CD8-positive, alpha-beta T cell (primary cell): ENCODE measurements at regions of chr10 and their contacts with region 1.

Region 1: DNA sequence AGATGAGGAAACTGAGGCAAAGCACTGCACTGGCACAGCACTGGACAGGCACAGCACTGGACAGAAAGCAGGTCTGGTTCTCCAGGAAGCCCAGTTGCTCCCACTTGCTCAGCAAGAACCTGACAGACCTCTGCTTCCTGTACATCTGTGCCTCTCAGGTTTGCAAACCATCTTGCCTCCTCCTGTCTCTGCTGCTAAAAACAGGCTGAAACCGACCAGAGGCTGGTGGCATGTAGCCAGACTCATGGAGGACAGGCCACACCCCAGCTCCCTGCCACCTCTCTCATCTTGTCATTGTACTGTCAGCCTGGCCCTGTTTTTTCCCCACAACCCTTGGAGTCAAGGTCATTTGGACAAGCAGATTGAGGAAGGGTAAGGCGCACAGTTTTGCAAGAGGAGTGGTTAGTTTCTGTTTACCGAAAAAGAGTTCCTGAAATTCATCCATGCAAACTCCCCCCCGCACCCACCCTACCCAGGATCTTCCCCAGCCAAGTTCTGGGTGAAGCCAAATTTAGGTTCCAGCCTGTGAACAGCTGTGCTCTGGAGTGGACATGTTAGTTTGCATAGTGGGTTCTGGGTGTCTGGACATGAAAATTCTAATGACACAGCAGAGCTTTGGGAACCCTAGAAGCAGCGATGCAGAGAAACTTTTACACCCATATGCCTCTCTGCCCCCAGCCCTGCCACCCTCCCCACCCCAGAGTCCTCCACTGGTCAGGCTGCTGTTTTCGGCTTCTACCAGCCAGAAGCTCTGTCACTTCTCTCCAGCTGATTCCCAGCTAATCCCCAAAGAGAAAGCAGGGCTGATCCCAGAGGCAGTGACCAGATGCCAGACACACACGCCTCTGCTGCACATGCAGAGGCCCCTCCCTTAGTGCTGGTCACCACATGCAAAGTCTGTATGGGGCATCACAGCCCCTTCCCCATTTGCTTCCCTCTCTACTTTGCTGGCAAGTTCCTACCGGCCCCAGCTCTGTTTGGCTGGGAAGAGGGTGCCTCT is 8.5 kb upstream of the C10orf105 start:
- DNase-seq: peak; percentile 58 to 93 (median 78)
- ATAC-seq: peak; percentile 60
- H3K4me3 ChIP-seq: peak overlapping the region; percentile 16 to 18
- H3K4me3 Mint-ChIP-seq: peak overlapping the region; percentile 58
- H3K27ac ChIP-seq: peak overlapping the region; percentile 75 to 86
- H3K27ac Mint-ChIP-seq: peak overlapping the region; percentile 98
- H3K4me1 ChIP-seq: peaks cover 93% of the 10 kb centered on the region
- H3K4me1 Mint-ChIP-seq: peaks cover 86% of the 10 kb centered on the region
- H3K27me3 ChIP-seq: no peaks in the 10 kb centered on the region
- H3K27me3 Mint-ChIP-seq: no peaks in the 10 kb centered on the region
- CTCF ChIP-seq: no peak

Region 2: DNA sequence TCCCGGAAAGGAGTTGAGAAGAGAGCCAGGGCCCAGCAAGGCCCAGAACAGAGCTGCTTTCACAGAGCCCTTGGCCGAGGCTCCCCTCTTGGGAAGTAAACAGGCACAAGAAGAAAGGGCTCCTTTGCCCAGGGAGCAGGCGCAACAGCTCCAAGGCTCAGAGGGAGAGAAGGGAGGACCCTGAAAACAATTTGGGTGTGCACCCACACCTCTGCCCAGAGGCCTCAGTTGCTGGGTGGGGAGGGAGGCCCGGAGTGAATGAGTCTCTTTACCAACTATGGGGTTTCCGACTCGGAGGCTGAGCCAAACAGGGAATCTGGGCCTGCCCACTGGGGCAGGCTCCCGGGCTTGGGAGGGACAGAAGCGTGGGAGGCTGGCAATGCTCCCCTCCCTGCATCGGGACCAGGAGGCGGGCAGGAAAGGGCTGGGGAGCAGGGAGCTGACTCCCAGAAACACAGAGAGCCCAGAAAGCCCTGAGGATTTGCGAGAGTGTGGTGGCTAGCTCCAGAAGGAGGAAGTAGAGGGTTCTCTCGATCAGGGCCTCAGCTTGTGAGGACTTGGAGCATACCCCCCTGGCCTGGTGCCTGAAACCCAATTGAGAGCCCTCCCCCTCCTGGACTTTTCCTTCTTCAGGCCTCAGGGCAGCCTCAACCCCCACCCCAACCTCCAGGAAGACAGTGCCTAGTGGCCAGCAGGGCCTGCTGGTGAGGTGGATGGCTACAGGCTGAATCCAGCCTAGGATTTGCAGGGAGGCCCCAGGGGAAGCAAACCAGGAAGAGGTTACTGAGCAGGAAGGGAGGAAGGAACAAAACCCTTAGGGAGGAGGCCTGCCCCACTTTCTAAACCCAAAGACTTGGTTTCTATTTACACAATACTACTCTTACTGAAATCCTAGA is 14.7 kb before region 1 on chr10:
- CTCF ChIA-PET with region 1: interaction called, 51 read pairs
- POLR2A ChIA-PET with region 1: interaction called, 19 read pairs
- intact Hi-C with region 1: loop called in 1 of 2 experiments (anchors 1 kb)
- DNase-seq: peak in 5 of 9 experiments; percentile 20 to 76 (median 39)
- ATAC-seq: peak; percentile 57
- H3K4me3 ChIP-seq: peak overlapping the region; percentile 21 to 24
- H3K4me3 Mint-ChIP-seq: peak overlapping the region; percentile 81
- H3K27ac ChIP-seq: peak overlapping the region; percentile 77 to 92
- H3K27ac Mint-ChIP-seq: peak overlapping the region; percentile 98
- H3K4me1 ChIP-seq: peaks cover 67% of the 10 kb centered on the region
- H3K4me1 Mint-ChIP-seq: peaks cover 72% of the 10 kb centered on the region
- H3K27me3 ChIP-seq: no peaks in the 10 kb centered on the region
- H3K27me3 Mint-ChIP-seq: no peaks in the 10 kb centered on the region
- CTCF ChIP-seq: no peak

Region 3: DNA sequence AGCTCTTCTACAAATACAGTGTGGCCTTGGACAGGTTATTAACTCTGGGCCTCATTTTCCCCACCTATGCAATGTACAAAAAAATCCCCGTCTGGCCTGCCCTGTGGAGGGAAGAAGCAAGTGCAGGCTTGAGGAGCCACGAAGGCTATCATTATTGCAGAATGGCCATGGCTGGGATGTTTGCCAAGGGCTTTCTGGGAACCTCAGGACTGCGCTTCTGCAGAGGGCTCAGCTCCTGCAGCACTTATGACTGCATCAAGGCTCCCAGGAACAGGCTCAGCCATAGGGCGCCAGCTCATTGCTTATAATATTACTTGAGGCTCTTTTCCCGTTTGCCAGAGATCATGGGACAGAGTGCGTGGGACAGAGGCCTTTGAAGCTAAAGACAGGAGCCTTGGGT is 12.0 kb after region 1 on chr10:
- CTCF ChIA-PET with region 1: interaction called, 84 read pairs
- POLR2A ChIA-PET with region 1: interaction called, 89 read pairs
- intact Hi-C with region 1: loop called (anchors 1 kb)
- DNase-seq: no peak
- ATAC-seq: no peak
- H3K4me3 ChIP-seq: peak overlapping the region in 1 of 2 experiments; percentile 45
- H3K4me3 Mint-ChIP-seq: peak overlapping the region; percentile 41
- H3K27ac ChIP-seq: peak overlapping the region in 1 of 2 experiments; percentile 38
- H3K27ac Mint-ChIP-seq: peak overlapping the region; percentile 93
- H3K4me1 ChIP-seq: peaks cover 100% of the 10 kb centered on the region
- H3K4me1 Mint-ChIP-seq: peaks cover 99% of the 10 kb centered on the region
- H3K27me3 ChIP-seq: no peaks in the 10 kb centered on the region
- H3K27me3 Mint-ChIP-seq: no peaks in the 10 kb centered on the region
- CTCF ChIP-seq: no peak

Region 4: GRCh38 chr10:71748671-71749191 is 20.7 kb after region 1 on chr10:
- CTCF ChIA-PET with region 1: interaction called, 84 read pairs
- POLR2A ChIA-PET with region 1: interaction called, 89 read pairs
- intact Hi-C with region 1: loop called (anchors 1 to 2 kb)
- DNase-seq: peak; percentile 57 to 93 (median 78)
- ATAC-seq: peak; percentile 88
- H3K4me3 ChIP-seq: peak overlapping the region in 1 of 2 experiments; percentile 27
- H3K4me3 Mint-ChIP-seq: peak overlapping the region; percentile 74
- H3K27ac ChIP-seq: peak overlapping the region; percentile 57 to 82
- H3K27ac Mint-ChIP-seq: peak overlapping the region; percentile 93
- H3K4me1 ChIP-seq: peaks cover 100% of the 10 kb centered on the region
- H3K4me1 Mint-ChIP-seq: peaks cover 96% of the 10 kb centered on the region
- H3K27me3 ChIP-seq: no peaks in the 10 kb centered on the region
- H3K27me3 Mint-ChIP-seq: no peaks in the 10 kb centered on the region
- CTCF ChIP-seq: no peak

Region 5: DNA sequence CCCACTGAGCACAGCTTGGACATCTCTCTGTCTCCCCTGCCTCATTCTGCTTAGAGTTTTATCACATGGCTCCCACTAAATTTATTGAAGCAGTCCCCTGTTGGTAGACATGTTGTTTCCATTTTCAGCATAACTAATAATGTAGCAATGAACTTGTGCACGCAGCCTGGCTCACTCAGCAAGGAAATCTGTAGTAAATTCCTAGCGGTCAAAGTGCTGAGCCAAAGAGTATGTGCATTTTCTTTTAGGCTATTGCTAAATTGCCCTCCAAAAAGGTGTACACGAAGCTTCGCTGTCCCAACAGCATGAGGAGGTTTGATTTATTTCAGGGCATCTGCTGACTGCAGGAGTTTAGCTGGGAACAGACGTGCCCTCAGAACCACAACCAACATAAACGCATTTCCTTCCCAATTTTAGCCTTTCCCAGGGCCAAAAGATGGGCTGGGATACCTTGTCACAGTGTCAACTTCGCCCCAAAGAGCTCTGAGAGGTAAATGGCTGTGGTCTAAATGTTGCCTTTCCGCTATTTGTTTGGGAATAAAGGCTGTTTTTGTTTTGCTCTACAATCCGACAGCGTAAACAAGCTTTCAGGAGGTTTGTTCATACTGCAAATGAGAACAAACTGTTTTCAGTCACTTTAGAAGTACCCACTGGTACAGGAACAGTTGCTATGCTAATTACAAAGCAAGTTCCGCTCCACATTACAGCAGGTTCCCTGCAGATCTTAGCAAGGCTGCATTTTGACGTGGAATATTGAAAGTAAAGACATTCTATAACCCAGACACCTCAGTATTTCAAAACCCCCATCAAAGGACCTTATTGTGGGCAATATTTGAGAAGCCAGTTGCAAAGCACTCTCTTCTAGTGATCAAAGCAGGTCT is 28.5 kb after region 1 on chr10:
- CTCF ChIA-PET with region 1: interaction called, 207 read pairs
- POLR2A ChIA-PET with region 1: interaction called, 23 read pairs
- intact Hi-C with region 1: no loop called
- DNase-seq: peak in 3 of 9 experiments; percentile 29 to 81 (median 61)
- ATAC-seq: peak; percentile 69
- H3K4me3 ChIP-seq: peak overlapping the region; percentile 7 to 38
- H3K4me3 Mint-ChIP-seq: peak overlapping the region; percentile 75
- H3K27ac ChIP-seq: peak overlapping the region; percentile 48 to 73
- H3K27ac Mint-ChIP-seq: peak overlapping the region; percentile 95
- H3K4me1 ChIP-seq: peaks cover 93% of the 10 kb centered on the region
- H3K4me1 Mint-ChIP-seq: peaks cover 91% of the 10 kb centered on the region
- H3K27me3 ChIP-seq: no peaks in the 10 kb centered on the region
- H3K27me3 Mint-ChIP-seq: no peaks in the 10 kb centered on the region
- CTCF ChIP-seq: no peak

Region 6: DNA sequence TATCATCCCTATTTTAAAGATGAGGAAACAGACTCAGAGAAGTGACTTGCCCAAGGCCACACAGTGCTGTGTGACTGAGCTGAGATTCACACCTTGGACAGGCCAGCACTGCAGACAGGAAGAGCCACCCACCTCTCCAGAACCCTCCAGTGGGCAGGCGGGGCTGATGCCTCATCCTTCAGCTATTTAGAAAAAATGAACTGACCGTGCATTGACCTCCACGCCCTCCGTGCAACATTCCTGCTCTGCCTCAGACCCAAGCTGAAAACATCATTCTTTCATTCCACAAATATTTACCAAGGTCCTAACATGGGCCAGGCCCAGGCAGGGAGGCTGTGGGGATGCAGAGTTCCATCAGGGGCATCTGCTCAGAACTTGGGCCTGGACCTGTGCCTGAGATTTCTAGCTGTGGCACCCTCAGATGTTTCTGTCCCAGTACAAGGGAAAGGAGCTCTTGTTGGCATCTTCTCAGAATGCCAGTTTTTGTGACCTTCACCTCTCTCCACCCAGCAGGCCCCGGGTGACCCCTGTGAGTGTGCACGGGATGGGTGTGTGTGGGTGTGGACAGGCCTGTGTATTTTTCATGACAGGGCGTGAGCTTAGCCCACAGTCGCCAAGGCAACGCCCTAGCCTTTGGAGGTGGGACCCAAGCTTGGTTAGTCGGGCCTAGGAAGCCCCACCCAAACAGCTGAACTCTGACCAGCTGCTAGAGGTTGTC is 38.8 kb after region 1 on chr10:
- CTCF ChIA-PET with region 1: interaction called, 207 read pairs
- POLR2A ChIA-PET with region 1: interaction called, 162 read pairs
- intact Hi-C with region 1: loop called in 1 of 2 experiments (anchors 1 kb)
- DNase-seq: peak in 3 of 9 experiments; percentile 55 to 64 (median 57)
- ATAC-seq: no peak
- H3K4me3 ChIP-seq: peak overlapping the region in 1 of 2 experiments; percentile 13
- H3K4me3 Mint-ChIP-seq: peak overlapping the region; percentile 70
- H3K27ac ChIP-seq: peak overlapping the region; percentile 17 to 89
- H3K27ac Mint-ChIP-seq: peak overlapping the region; percentile 96
- H3K4me1 ChIP-seq: peaks cover 92% of the 10 kb centered on the region
- H3K4me1 Mint-ChIP-seq: peaks cover 93% of the 10 kb centered on the region
- H3K27me3 ChIP-seq: no peaks in the 10 kb centered on the region
- H3K27me3 Mint-ChIP-seq: no peaks in the 10 kb centered on the region
- CTCF ChIP-seq: no peak